HCT116 (cell line): ENCODE measurements at regions of chr2 and their contacts with region 1.

Region 1: DNA sequence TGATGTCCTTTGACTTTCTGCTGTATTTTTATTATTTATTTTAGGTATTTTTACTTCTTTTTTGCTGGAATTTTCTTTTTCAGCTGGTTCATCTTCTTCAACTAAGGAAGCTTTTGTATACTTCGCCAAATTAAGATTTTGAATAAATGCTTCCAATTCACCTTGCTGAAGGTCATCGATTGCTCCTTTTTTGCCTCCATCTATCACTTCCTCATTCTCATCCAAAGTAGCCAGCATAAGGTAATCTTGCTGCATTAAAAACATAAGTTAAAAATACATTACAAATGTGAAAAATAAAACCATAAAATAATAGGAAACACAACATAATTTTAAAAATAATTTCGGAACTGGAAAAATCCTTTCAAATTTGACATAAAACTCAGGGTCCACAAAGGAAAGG is 2.6 kb downstream of the CEBPZ start:
- DNase-seq: no peak
- ATAC-seq: no peak
- H3K4me3 ChIP-seq: no peak overlapping the region
- H3K27ac ChIP-seq: no peak overlapping the region
- H3K4me1 ChIP-seq: peaks cover 14 to 23% of the 10 kb centered on the region in 2 experiments
- H3K27me3 ChIP-seq: no peaks in the 10 kb centered on the region
- CTCF ChIP-seq: no peak
- POLR2A ChIP-seq: no peak
- RAD21 ChIP-seq: no peak

Region 2: DNA sequence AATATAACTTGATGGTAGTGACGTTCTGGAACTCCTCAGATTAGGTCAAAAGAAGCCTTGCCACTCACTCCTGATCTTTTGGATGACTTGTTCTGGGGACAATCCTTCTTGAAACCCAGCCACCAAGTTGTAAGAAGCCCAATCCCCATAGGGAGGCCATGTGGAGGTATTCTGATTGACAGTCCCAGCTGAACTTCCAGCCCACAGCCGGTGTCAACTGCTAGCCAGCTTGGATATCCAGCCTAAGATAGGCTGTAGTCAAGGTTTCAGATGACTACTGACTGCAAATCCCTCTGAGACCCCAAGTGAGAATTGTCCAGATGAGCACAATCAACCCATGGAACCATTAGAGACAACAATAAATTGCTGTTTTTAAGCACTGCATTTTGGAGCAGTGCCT is 103.4 kb before region 1 on chr2:
- CTCF ChIA-PET with region 1: no interaction called
- POLR2A ChIA-PET with region 1: no interaction called
- RAD21 ChIA-PET with region 1: no interaction called
- intact Hi-C with region 1: no loop called
- DNase-seq: no peak
- ATAC-seq: no peak
- H3K4me3 ChIP-seq: no peak overlapping the region
- H3K27ac ChIP-seq: no peak overlapping the region
- H3K4me1 ChIP-seq: no peaks in the 10 kb centered on the region
- H3K27me3 ChIP-seq: no peaks in the 10 kb centered on the region
- CTCF ChIP-seq: no peak
- POLR2A ChIP-seq: no peak
- RAD21 ChIP-seq: no peak

Region 3: DNA sequence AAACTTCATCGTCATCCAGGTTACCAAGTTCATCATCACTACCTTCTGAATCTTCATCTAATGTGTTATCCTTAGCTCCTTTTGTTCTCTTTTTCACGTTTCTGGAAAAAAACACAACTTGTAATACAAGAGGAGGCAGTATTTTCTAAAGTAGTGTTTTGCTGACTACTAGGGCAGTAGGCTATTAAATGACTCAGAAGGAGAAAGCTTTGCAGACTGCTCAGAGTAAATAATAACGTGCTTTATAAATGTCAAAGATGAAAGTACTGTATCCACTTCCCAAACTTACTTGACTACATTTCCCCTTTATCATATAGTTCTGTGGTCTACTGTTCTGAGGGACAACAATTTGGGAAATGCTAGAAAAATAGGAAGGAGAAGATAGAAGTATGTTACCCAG is 16.8 kb before region 1 on chr2:
- CTCF ChIA-PET with region 1: no interaction called
- POLR2A ChIA-PET with region 1: interaction called, 4 read pairs
- RAD21 ChIA-PET with region 1: no interaction called
- intact Hi-C with region 1: loop called (anchors 2 kb)
- DNase-seq: no peak
- ATAC-seq: no peak
- H3K4me3 ChIP-seq: no peak overlapping the region
- H3K27ac ChIP-seq: no peak overlapping the region
- H3K4me1 ChIP-seq: no peaks in the 10 kb centered on the region
- H3K27me3 ChIP-seq: no peaks in the 10 kb centered on the region
- CTCF ChIP-seq: no peak
- POLR2A ChIP-seq: no peak
- RAD21 ChIP-seq: no peak